Activated T-helper 1 cell treated with anti-CD3 and anti-CD28 coated beads, Interleukin-12 subunit alpha, Interleukin-12 subunit beta, Interleukin-2, Interleukin-4 antibody, amounts not matched to agents 30 ng/mL and 10 ng/mL and 1 ng/mL, durations not matched to agents 14 hours and 24 hours and 36 hours (primary cell): ENCODE measurements at regions of chr2 and their contacts with region 1.

Region 1: DNA sequence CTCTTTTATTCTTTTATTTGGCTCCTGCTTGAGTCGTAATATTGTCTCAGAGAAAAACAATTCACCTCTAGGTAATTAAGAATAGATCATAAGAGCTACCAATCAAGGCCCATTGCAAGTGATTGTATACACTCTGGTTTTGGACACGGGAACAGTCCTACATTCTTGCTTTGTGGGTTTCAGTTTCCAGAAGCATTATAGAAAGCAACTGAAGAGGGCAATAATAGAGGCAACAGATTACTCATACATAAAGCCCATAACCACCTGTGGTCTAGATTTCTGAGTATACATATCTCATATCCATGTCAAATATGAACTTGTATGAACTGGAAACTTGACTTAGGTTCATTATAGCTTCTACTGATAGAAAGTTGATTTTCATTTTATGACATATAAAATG is 65.4 kb downstream of the DIS3L2 start:
- DNase-seq: peak; percentile 7
- H3K4me3 Mint-ChIP-seq: peak overlapping the region; percentile 25
- H3K27ac Mint-ChIP-seq: no peak overlapping the region
- H3K4me1 Mint-ChIP-seq: peaks cover 28% of the 10 kb centered on the region
- H3K27me3 Mint-ChIP-seq: peaks cover 10% of the 10 kb centered on the region

Region 2: DNA sequence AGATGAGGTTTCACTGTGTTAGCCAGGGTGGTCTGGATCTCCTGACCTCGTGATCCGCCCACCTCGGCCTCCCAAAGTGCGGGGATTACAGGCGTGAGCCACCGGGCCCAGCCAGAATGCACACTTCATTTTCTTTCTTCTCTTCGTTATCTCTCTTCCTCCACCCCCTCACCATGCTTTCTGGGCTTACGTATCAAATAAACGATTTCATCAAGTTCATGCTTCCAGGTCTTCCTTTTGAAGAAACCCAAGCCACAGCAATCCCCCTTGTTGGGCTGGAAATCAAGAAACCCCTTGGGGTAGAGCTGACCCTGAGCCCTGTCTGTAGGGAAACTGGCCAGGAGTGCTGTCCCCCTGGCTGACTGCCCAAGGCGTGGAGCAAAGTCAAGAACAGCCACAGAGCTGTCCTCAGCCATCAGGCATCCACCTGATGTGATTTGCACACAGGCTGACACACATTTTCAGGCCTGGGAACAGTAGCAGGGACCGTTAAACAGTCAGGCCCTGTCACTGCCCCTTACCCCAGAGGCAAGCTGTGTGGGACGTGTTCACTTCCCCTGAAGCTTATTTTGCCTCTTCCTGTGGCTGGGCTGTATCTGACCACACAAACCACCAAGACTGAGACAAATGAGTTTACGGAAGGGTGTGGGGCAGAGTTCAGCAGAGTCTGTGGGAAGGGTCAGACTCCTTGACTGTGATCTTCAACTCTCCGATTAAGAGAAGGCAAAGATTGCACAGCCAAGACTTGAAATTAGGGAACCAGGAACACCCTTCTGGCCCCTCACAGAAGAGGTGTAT is 481.6 kb before region 1 on chr2:
- intact Hi-C with region 1: loop called (anchors 5 kb)
- DNase-seq: peak; percentile 76
- H3K4me3 Mint-ChIP-seq: peak overlapping the region; percentile 79
- H3K27ac Mint-ChIP-seq: peak overlapping the region; percentile 96
- H3K4me1 Mint-ChIP-seq: peaks cover 45% of the 10 kb centered on the region
- H3K27me3 Mint-ChIP-seq: peaks cover 5% of the 10 kb centered on the region

Region 3: GRCh38 chr2:231961349-231962166 is 65.4 kb before region 1 on chr2 and contains the start of gene DIS3L2:
- intact Hi-C with region 1: loop called (anchors 1 kb)
- DNase-seq: peak; percentile 75
- H3K4me3 Mint-ChIP-seq: peak within 1 kb of the TSS; percentile 97
- H3K27ac Mint-ChIP-seq: peak within 1 kb of the TSS; percentile 93
- H3K4me1 Mint-ChIP-seq: peaks cover 22% of the 10 kb centered on the region
- H3K27me3 Mint-ChIP-seq: peaks cover under 1% of the 10 kb centered on the region
- total RNA-seq, gene DIS3L2: 27.9 and 33.1 TPM in 2 replicates

Region 4: DNA sequence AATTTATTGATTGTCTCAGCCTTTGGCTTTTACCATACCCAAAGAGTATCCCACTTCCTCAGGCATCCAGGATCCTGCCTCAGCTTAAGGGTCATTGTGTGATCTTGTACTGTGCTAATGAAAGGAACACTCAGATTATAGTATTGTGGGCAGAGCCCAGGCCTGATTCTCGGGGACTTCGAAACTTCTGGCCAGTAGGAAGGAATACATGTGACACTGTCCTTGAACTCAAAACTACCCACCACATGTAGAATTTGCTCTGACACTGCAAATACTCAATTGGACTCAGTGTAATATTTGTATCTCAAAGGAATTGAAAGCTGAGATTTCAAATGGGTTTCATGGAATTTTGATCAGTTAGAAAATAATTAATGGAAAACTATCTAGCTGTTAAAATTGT is 49.5 kb before region 1 on chr2:
- intact Hi-C with region 1: no loop called
- DNase-seq: no peak
- H3K4me3 Mint-ChIP-seq: no peak overlapping the region
- H3K27ac Mint-ChIP-seq: no peak overlapping the region
- H3K4me1 Mint-ChIP-seq: no peaks in the 10 kb centered on the region
- H3K27me3 Mint-ChIP-seq: no peaks in the 10 kb centered on the region

Region 5: DNA sequence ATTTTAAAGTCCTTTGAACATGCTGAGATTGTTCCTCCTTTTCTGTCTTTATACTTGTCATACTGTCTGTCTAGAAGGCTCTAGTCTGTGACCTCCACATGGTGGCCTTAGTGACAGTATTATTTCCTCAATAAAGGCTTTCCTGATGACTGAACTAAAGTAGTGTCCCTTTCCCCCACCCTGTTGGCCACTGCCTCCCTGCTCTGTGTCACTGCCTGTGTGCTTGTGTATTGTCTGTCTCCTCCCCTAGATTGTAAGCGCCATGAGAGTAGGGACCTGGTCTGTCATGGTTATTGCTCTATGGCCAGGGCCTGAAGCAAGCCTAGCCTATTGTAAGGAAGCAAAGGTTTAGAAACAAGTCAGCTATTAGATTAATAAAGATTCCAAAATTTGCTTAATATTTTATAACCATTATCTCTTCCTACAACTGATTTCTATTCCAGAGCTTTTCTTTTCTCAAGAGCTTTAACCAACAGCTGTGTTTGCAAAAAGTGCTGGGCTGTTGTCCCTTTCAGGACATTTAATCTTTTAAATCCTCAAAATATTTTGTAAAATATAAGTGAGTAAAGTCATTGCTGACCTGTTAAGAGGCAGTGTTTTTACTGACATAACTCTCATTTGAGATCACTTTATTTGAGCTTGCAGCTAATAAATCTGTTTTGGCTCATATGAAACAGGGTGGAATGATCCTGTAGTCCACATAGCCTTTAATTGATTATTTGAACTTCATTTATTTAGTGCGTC is 29.9 kb before region 1 on chr2:
- intact Hi-C with region 1: no loop called
- DNase-seq: no peak
- H3K4me3 Mint-ChIP-seq: no peak overlapping the region
- H3K27ac Mint-ChIP-seq: no peak overlapping the region
- H3K4me1 Mint-ChIP-seq: no peaks in the 10 kb centered on the region
- H3K27me3 Mint-ChIP-seq: no peaks in the 10 kb centered on the region

Region 6: DNA sequence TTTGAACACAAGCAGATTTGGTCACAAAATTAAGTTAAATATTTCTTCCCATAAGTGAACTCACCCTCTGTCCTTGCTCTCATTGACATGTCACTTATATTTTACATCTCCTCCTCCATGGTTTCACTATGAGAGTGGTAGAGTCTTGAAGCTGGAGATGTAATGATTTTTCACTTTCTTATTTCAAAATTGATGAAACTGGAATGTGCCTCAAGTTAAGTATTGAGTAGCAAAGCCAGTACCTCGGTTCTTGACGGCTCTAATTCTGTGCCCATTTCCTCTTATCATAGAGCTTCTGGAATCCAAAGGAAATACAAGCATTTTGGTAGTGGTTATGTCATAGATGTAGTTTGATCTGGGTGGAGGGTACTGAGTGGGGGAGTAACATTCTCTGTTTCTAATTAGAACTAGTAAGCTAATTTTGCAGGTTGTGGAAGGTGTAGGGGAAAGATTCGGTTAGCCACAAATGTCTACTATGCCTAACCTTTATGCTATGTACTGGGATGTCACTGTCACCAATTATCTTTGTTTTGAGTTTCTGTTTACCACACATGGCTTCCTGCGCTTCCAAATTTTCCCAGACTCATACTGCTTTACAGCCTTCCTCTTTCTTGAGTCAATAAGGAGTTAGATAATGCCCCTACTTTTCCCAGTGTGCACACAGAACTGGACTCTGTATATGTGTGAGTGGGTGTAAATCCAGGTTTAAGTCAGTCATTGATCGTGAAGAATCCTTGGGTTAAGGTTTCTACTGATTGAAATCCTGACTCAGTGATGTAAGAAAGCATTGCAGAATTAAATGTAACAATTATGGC is 31.4 kb after region 1 on chr2:
- intact Hi-C with region 1: loop called (anchors 1 kb)
- DNase-seq: no peak
- H3K4me3 Mint-ChIP-seq: no peak overlapping the region
- H3K27ac Mint-ChIP-seq: peak overlapping the region; percentile 20
- H3K4me1 Mint-ChIP-seq: peaks cover 10% of the 10 kb centered on the region
- H3K27me3 Mint-ChIP-seq: peaks cover 8% of the 10 kb centered on the region

Region 7: GRCh38 chr2:232315049-232315922 is 288.4 kb after region 1 on chr2:
- intact Hi-C with region 1: loop called (anchors 1 kb)
- DNase-seq: peak; percentile 72
- H3K4me3 Mint-ChIP-seq: peak overlapping the region; percentile 78
- H3K27ac Mint-ChIP-seq: peak overlapping the region; percentile 94
- H3K4me1 Mint-ChIP-seq: peaks cover 49% of the 10 kb centered on the region
- H3K27me3 Mint-ChIP-seq: no peaks in the 10 kb centered on the region